Mammary epithelial cell (primary cell): ENCODE measurements at regions of chr15 and their contacts with region 1.

Region 1: GRCh38 chr15:40830884-40831283 is 2.4 kb upstream of the PPP1R14D start:
- DNase-seq: no peak
- H3K4me3 ChIP-seq: no peak overlapping the region
- H3K27ac ChIP-seq: no peak overlapping the region
- H3K4me1 ChIP-seq: peaks cover 12% of the 10 kb centered on the region
- H3K27me3 ChIP-seq: no peaks in the 10 kb centered on the region
- CTCF ChIP-seq: no peak

Region 2: DNA sequence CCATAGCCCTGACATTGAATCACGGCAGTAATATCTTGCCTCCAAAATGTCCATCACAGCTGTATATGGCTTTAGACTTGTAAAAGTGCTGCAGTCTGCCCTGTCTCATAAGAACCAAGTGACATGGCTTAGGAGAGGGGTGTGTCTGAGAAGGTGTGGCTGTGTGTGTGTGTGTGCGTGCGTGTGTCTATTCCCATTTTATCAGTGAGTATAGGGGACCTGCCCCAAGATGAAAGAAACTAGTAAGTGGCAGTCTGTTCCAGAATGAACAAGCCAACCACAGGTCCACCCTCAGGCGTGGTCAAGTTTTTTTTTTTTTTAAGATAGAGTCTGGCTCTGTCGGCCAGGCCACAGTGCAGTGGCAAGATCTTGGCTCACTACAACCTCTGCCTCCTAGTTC is 48.7 kb after region 1 on chr15:
- CTCF ChIA-PET with region 1: no interaction called
- dilution Hi-C with region 1: loop called (anchors 10 kb)
- in situ Hi-C with region 1: no loop called
- intact Hi-C with region 1: no loop called
- DNase-seq: no peak
- H3K4me3 ChIP-seq: no peak overlapping the region
- H3K27ac ChIP-seq: no peak overlapping the region
- H3K4me1 ChIP-seq: peaks cover 11% of the 10 kb centered on the region
- H3K27me3 ChIP-seq: no peaks in the 10 kb centered on the region
- CTCF ChIP-seq: no peak

Region 3: GRCh38 chr15:41169781-41170180 is 338.9 kb after region 1 on chr15:
- CTCF ChIA-PET with region 1: interaction called, 14 read pairs
- dilution Hi-C with region 1: no loop called
- in situ Hi-C with region 1: no loop called
- intact Hi-C with region 1: no loop called
- DNase-seq: no peak
- H3K4me3 ChIP-seq: no peak overlapping the region
- H3K27ac ChIP-seq: no peak overlapping the region
- H3K4me1 ChIP-seq: no peaks in the 10 kb centered on the region
- H3K27me3 ChIP-seq: no peaks in the 10 kb centered on the region
- CTCF ChIP-seq: no peak